Mammary epithelial cell (primary cell): ENCODE measurements at regions of chr10 and their contacts with region 1.

Region 1: DNA sequence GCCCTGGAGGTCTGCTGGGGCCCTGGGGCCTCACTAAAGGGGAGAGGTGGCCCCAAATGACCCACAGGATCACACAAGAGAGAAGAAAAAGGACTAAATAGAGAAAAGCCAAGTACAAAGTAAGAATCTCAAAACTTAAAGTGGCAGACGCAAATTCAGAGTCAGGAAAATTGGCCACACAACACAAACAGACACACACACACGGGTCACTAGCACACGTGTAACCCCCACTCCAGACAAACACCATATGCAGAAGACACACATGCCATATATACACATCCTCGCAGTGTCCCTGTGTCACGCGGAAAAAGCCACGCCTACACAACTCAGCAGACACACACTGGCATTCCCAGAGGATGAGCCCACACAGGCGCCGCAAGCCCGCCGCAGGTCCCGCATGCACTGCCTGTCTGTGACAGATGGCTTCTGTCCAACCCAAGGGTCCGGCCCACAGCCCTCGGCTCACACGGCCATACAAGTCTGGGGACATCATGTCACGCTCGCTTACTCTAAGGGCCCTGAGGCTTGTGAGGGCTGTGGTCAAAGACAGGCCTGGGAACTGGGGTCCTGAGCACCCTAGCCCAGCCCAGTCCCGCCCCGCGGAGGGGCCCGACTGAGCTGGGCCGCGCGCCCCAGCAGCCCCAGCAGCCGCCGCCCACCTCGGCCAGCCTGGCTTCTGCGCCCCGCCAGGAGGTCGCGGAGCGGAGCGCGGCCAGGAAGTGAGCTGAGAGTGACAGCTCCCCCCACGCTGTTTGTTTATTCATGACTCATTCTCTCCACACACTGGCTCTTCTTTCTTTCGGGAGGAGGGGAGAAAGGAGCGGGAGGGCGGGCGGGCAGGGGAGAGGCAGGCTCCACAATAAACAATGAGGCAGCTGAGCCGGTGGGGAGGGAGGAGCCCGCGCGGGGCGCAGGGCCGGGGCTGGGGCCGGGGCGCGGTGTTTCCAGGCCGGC is 95.5 kb upstream of the ZMIZ1 start:
- DNase-seq: peak; percentile 84
- H3K4me3 ChIP-seq: peak overlapping the region; percentile 15 to 43 (median 37)
- H3K27ac ChIP-seq: peak overlapping the region; percentile 79
- H3K4me1 ChIP-seq: peaks cover 41% of the 10 kb centered on the region
- H3K27me3 ChIP-seq: no peaks in the 10 kb centered on the region
- CTCF ChIP-seq: no peak

Region 2: DNA sequence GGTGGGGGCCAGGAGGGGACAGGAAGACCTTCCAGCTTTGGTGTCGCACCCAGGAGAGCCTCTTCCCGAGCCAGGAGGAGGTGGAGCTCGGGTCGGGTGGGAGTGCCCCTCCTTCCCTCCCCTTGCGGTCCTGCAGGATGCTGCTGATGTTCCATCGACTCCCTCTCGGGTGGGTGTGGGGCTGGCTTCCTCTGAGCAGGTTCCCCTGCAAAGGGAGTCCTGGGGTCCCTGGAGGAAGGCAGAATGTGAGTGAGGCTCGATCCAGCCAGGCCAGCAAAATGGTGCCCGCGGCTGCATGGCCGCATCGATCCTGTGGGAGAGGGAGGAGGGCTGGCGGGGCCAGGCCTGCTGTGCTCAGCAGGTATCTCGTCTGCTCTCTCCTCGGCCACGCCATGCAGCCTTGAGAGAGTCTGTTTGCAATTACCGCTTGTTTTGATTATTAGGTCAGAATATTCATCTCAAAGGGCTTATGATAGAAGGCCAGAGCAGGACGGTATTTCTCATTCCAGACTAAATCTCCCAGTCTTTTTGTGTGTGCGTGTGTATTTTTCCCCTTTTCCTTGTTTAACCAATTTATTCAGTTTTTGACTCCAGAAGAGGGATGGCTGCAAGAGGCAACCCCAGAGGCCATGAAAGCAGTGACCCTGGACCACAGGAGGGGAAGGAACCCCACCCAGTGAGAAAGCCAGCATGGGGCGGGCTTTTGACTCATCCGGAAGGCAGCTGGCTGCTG is 41.7 kb before region 1 on chr10:
- CTCF ChIA-PET with region 1: no interaction called
- dilution Hi-C with region 1: no loop called
- in situ Hi-C with region 1: no loop called
- intact Hi-C with region 1: no loop called
- DNase-seq: peak; percentile 57
- H3K4me3 ChIP-seq: no peak overlapping the region
- H3K27ac ChIP-seq: no peak overlapping the region
- H3K4me1 ChIP-seq: peaks cover 11% of the 10 kb centered on the region
- H3K27me3 ChIP-seq: no peaks in the 10 kb centered on the region
- CTCF ChIP-seq: no peak

Region 3: GRCh38 chr10:79019911-79020491 is 46.8 kb after region 1 on chr10:
- CTCF ChIA-PET with region 1: no interaction called
- dilution Hi-C with region 1: no loop called
- in situ Hi-C with region 1: no loop called
- intact Hi-C with region 1: loop called (anchors 2 kb)
- DNase-seq: peak; percentile 81
- H3K4me3 ChIP-seq: no peak overlapping the region
- H3K27ac ChIP-seq: no peak overlapping the region
- H3K4me1 ChIP-seq: peaks cover 19% of the 10 kb centered on the region
- H3K27me3 ChIP-seq: no peaks in the 10 kb centered on the region
- CTCF ChIP-seq: no peak